Lower leg skin (tissue), 4 donors: ENCODE measurements at regions of chr2 and their contacts with region 1.

Region 1: DNA sequence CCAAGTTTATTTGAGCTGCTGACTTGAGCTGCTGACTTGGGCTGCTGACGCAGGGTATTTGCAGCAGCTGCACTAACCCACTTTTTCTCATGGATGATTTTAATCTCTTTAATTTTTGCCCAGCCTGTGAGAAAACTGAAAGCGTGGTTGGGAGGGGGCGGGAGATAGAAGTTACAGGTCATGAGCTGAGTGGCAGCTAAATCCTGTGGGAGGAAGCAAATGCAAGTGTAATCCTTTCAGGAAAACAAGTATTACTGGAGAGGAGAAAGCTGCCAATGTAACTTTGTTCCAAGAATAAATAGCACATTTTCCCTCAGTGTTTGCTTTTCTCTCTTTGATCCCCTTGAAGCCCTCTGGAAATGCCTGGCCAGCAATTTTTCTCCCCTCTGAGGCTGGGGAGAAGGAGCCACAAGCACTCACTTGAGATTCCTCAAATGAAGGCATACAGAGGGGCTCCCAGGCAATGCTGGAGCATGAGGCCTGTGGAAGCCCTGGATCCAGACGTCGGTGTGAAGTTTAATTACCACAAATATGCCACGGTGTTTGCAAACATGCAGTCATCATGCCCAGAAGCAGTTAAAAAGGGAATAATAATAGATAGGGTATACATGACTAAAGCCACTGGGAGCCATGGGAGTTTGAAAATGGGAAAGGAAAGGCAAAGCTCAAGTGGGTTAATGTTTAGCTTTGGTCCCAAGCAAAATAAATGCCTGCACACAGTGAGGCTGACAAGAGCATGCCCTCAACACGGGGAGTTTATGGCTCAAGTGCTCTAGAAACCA is 10.4 kb upstream of the EVA1A start:
- DNase-seq: no peak
- H3K4me3 ChIP-seq: no peak overlapping the region
- CTCF ChIP-seq: no peak
- POLR2A ChIP-seq: no peak

Region 2: GRCh38 chr2:75035444-75036353 is 535.4 kb before region 1 on chr2:
- intact Hi-C with region 1: no loop called
- DNase-seq: no peak
- H3K4me3 ChIP-seq: no peak overlapping the region
- CTCF ChIP-seq: no peak
- POLR2A ChIP-seq: no peak

Region 3: DNA sequence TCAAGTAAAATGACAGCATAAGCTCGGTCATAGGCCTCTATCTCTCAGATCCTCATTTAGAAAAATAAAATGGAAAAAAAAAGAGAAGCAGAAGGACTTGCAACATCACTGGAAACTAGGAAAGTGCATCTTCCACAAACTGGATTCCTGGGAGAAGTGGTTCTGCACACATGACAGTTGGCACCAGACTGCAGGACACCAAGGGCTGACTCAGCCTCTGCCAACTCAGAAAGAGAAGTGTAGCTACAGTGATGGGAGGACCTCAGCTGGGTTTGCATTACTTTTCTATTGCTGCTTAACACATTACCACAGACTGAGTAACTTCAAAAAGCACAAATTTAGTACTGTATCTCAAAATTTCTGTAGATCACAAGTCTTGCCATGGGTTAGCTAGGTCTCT is 549.0 kb after region 1 on chr2:
- intact Hi-C with region 1: loop called (anchors 10 kb)
- DNase-seq: no peak
- H3K4me3 ChIP-seq: no peak overlapping the region
- CTCF ChIP-seq: no peak
- POLR2A ChIP-seq: no peak